GM23248 (cell line): ENCODE measurements at regions of chr15 and their contacts with region 1.

Region 1: DNA sequence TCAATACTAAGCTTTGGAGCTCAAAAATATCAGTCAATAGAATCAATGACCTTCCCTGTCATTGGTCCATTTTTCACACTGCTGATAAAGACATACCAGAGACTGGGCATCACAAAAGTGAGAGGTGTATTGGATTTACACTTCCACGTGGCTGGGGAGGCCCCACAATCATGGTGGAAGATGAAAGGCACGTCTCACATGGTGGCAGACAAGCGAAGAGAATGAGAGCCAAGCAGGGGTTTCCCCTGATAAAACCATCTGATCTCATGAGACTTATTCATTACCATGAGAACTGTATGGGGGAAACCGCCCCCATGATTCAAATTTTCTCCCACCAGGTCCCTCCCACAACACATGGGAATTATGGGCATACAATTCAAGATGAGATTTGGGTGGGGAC is 81.9 kb downstream of the ANXA2 start:
- DNase-seq: no peak
- H3K4me3 ChIP-seq: no peak overlapping the region
- H3K27ac ChIP-seq: no peak overlapping the region
- H3K4me1 ChIP-seq: no peaks in the 10 kb centered on the region
- H3K27me3 ChIP-seq: peaks cover 25% of the 10 kb centered on the region

Region 2: DNA sequence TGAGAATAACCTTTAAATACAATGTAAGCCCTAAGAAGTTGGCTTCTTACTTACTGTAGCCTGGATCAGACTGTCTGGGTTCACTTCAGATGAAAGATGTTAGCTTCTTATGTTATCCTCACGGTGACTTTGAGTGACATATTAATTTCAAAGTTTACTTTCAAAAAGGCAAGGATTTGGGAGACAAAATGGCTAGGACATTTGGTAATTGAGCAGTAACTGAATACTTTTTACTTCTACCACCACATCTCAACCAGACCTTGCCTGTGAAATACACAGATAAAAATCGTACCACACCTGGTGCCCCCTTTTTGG is 590.7 kb before region 1 on chr15:
- in situ Hi-C with region 1: loop called (anchors 10 kb)
- DNase-seq: no peak
- H3K4me3 ChIP-seq: no peak overlapping the region
- H3K27ac ChIP-seq: no peak overlapping the region
- H3K4me1 ChIP-seq: no peaks in the 10 kb centered on the region
- H3K27me3 ChIP-seq: 0 out of 2 replicates have a peak, but pooled peaks cover 9% of the 10 kb centered on the region

Region 3: GRCh38 chr15:60397772-60398445 is 82.0 kb after region 1 on chr15 and contains the start of gene ANXA2:
- in situ Hi-C with region 1: no loop called
- DNase-seq: peak; percentile 97
- H3K4me3 ChIP-seq: peak within 1 kb of the TSS; percentile 95
- H3K27ac ChIP-seq: peak within 1 kb of the TSS; percentile 100
- H3K4me1 ChIP-seq: peaks cover 46% of the 10 kb centered on the region
- H3K27me3 ChIP-seq: no peaks in the 10 kb centered on the region
- total RNA-seq, gene ANXA2: 4,470 and 4,692 TPM in 2 replicates